Naive thymus-derived CD4-positive, alpha-beta T cell (primary cell): ENCODE measurements at regions of chr6 and their contacts with region 1.

Region 1: DNA sequence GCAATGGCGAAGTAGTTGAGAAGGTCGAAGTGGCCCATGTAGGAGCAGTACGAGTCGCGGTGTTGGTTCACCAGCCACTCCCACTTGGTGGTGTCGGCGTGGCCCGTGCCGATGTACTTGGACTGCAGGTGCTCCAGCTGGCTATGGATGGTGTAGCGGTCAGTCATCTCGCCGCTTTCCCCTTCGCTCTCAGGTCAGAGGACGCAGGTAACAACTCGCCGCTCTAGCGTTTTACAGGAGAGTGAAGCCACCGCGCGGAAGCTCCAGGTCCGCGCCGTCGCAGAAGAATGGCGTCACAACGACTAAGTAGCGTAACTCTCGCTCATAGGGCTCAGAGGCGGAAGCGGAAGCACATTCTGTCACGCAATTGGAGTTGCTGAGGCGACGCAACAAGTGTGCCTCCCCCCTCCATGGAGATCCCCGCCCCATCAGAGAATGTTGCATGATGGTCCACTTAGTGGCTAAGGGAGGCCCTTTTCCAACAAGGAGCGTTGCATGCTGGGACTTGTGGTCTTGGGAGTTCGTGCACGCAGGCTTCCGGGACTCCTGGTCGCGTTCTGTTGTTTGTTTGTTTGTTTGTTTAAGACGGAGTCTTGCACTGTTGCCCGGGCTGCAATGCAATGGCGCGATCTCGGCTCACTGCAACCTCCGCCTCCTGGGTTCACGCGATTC is at the start of gene SF3B5:
- DNase-seq: peak; percentile 86 to 99 (median 97)
- ATAC-seq: peak; percentile 98
- H3K4me3 ChIP-seq: peak within 1 kb of the TSS; percentile 98
- H3K4me3 Mint-ChIP-seq: peak within 1 kb of the TSS; percentile 93 to 100 (median 98)
- H3K27ac ChIP-seq: peak within 1 kb of the TSS; percentile 92
- H3K27ac Mint-ChIP-seq: peak within 1 kb of the TSS; percentile 96 to 100 (median 98)
- H3K4me1 ChIP-seq: peaks cover 13 to 14% of the 10 kb centered on the region in 2 donors
- H3K4me1 Mint-ChIP-seq: peaks cover 15 to 38% (median 32%) of the 10 kb centered on the region in 7 donors
- H3K27me3 ChIP-seq: no peaks in the 10 kb centered on the region
- H3K27me3 Mint-ChIP-seq: peaks cover 0 to 10% (median 0%) of the 10 kb centered on the region in 5 donors
- total RNA-seq, gene SF3B5: 89.2 to 155 (median 122) TPM

Region 2: GRCh38 chr6:143450453-143451371 is 644.8 kb before region 1 on chr6 and contains the starts of genes ADAT2 and PEX3:
- CTCF ChIA-PET with region 1: no interaction called
- POLR2A ChIA-PET with region 1: interaction called, 4 read pairs
- intact Hi-C with region 1: loop called (anchors 1 kb)
- DNase-seq: peak; percentile 87 to 95 (median 94)
- ATAC-seq: peak; percentile 98
- H3K4me3 ChIP-seq: peak within 1 kb of the TSS; percentile 89
- H3K4me3 Mint-ChIP-seq: peak within 1 kb of the TSS; percentile 84 to 100 (median 99)
- H3K27ac ChIP-seq: peak within 1 kb of the TSS; percentile 80
- H3K27ac Mint-ChIP-seq: peak within 1 kb of the TSS; percentile 93 to 99 (median 96)
- H3K4me1 ChIP-seq: peaks cover 14 to 18% of the 10 kb centered on the region in 2 donors
- H3K4me1 Mint-ChIP-seq: peaks cover 20 to 61% (median 49%) of the 10 kb centered on the region in 7 donors
- H3K27me3 ChIP-seq: no peaks in the 10 kb centered on the region
- H3K27me3 Mint-ChIP-seq: no peaks in the 10 kb centered on the region
- total RNA-seq, gene ADAT2: 18.4 to 25.8 (median 20.8) TPM
- total RNA-seq, gene PEX3: 10.9 to 28.8 (median 19.1) TPM

Region 3: GRCh38 chr6:143598466-143599080 is 496.9 kb before region 1 on chr6:
- CTCF ChIA-PET with region 1: no interaction called
- POLR2A ChIA-PET with region 1: no interaction called
- intact Hi-C with region 1: loop called in 1 of 2 experiments (anchors 1 kb)
- DNase-seq: peak in 1 of 9 donors; percentile 3
- ATAC-seq: peak; percentile 72
- H3K4me3 ChIP-seq: no peak overlapping the region
- H3K4me3 Mint-ChIP-seq: peak overlapping the region in 4 of 10 donors; percentile 16 to 36 (median 27)
- H3K27ac ChIP-seq: no peak overlapping the region
- H3K27ac Mint-ChIP-seq: peak overlapping the region in 1 of 9 donors; percentile 70
- H3K4me1 ChIP-seq: peaks cover 0 to 6% of the 10 kb centered on the region in 2 donors
- H3K4me1 Mint-ChIP-seq: peaks cover 13 to 24% (median 16%) of the 10 kb centered on the region in 7 donors
- H3K27me3 ChIP-seq: no peaks in the 10 kb centered on the region
- H3K27me3 Mint-ChIP-seq: no peaks in the 10 kb centered on the region

Region 4: DNA sequence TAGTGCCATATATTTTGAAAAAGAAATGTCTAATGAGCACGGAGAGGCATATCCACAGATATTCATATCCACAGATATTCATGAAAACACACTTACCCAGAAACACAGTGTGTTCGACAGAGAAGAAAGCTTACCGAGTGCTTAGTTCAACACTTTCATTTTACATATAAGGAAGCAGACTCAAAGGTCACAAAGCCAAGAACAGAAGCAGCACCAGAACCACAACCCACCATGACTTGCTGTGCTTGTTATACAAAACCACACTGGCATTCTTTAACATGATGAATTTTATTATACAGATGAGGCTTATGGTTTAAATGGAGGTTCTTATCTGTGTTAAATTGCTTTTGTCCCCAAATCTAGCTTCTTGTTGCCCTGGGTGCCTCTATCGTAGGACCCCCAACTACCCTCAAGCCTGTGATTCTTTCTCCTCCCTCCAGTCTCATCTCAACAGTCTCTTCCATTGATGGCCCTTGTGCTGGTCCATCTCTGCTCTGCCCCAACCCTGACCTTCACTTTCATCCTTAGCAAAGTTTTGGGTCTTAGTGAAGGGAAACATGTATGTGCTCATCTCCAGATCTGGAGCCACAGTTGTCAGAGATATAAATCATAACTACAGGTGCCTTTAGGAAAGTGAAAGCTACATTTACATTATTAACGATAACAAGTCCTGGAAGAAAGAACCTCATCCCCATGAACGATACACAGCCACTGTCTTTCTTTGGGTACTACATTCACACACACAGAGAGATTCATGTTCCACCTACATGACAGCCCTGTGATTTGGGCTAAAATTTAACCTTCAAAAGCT is 40.1 kb before region 1 on chr6:
- CTCF ChIA-PET with region 1: no interaction called
- POLR2A ChIA-PET with region 1: interaction called, 8 read pairs
- intact Hi-C with region 1: loop called (anchors 1 kb)
- DNase-seq: peak in 7 of 9 donors; percentile 49 to 76 (median 66)
- ATAC-seq: peak; percentile 96
- H3K4me3 ChIP-seq: peak overlapping the region; percentile 52
- H3K4me3 Mint-ChIP-seq: peak overlapping the region; percentile 74 to 93 (median 87)
- H3K27ac ChIP-seq: peak overlapping the region; percentile 66
- H3K27ac Mint-ChIP-seq: peak overlapping the region; percentile 78 to 99 (median 93)
- H3K4me1 ChIP-seq: peaks cover 12 to 23% of the 10 kb centered on the region in 2 donors
- H3K4me1 Mint-ChIP-seq: peaks cover 24 to 42% (median 31%) of the 10 kb centered on the region in 7 donors
- H3K27me3 ChIP-seq: no peaks in the 10 kb centered on the region
- H3K27me3 Mint-ChIP-seq: no peaks in the 10 kb centered on the region

Region 5: GRCh38 chr6:144215932-144216667 is 120.6 kb after region 1 on chr6:
- CTCF ChIA-PET with region 1: no interaction called
- POLR2A ChIA-PET with region 1: interaction called, 4 read pairs
- intact Hi-C with region 1: loop called (anchors 1 kb)
- DNase-seq: peak; percentile 84 to 96 (median 94)
- ATAC-seq: peak; percentile 91
- H3K4me3 ChIP-seq: peak overlapping the region; percentile 73
- H3K4me3 Mint-ChIP-seq: peak overlapping the region; percentile 84 to 99 (median 97)
- H3K27ac ChIP-seq: peak overlapping the region; percentile 86
- H3K27ac Mint-ChIP-seq: peak overlapping the region; percentile 91 to 100 (median 100)
- H3K4me1 ChIP-seq: peaks cover 15 to 18% of the 10 kb centered on the region in 2 donors
- H3K4me1 Mint-ChIP-seq: peaks cover 12 to 48% (median 40%) of the 10 kb centered on the region in 7 donors
- H3K27me3 ChIP-seq: no peaks in the 10 kb centered on the region
- H3K27me3 Mint-ChIP-seq: peaks cover 0 to 12% (median 0%) of the 10 kb centered on the region in 5 donors

Region 6: GRCh38 chr6:144232176-144232831 is 136.8 kb after region 1 on chr6:
- CTCF ChIA-PET with region 1: no interaction called
- POLR2A ChIA-PET with region 1: no interaction called
- intact Hi-C with region 1: no loop called
- DNase-seq: no peak
- ATAC-seq: no peak
- H3K4me3 ChIP-seq: no peak overlapping the region
- H3K4me3 Mint-ChIP-seq: no peak overlapping the region
- H3K27ac ChIP-seq: no peak overlapping the region
- H3K27ac Mint-ChIP-seq: peak overlapping the region in 1 of 9 donors; percentile 34
- H3K4me1 ChIP-seq: no peaks in the 10 kb centered on the region
- H3K4me1 Mint-ChIP-seq: no peaks in the 10 kb centered on the region
- H3K27me3 ChIP-seq: no peaks in the 10 kb centered on the region
- H3K27me3 Mint-ChIP-seq: peaks cover 0 to 6% (median 0%) of the 10 kb centered on the region in 5 donors

Region 7: GRCh38 chr6:144343701-144344428 is 248.4 kb after region 1 on chr6:
- CTCF ChIA-PET with region 1: no interaction called
- POLR2A ChIA-PET with region 1: no interaction called
- intact Hi-C with region 1: loop called (anchors 1 kb)
- DNase-seq: peak in 8 of 9 donors; percentile 37 to 85 (median 76)
- ATAC-seq: peak; percentile 88
- H3K4me3 ChIP-seq: peak overlapping the region; percentile 67
- H3K4me3 Mint-ChIP-seq: peak overlapping the region; percentile 80 to 99 (median 94)
- H3K27ac ChIP-seq: peak overlapping the region; percentile 75
- H3K27ac Mint-ChIP-seq: peak overlapping the region; percentile 87 to 99 (median 96)
- H3K4me1 ChIP-seq: peaks cover 58 to 62% of the 10 kb centered on the region in 2 donors
- H3K4me1 Mint-ChIP-seq: peaks cover 68 to 93% (median 84%) of the 10 kb centered on the region in 7 donors
- H3K27me3 ChIP-seq: no peaks in the 10 kb centered on the region
- H3K27me3 Mint-ChIP-seq: no peaks in the 10 kb centered on the region

Region 8: GRCh38 chr6:144718431-144718830 is 623.0 kb after region 1 on chr6:
- CTCF ChIA-PET with region 1: no interaction called
- POLR2A ChIA-PET with region 1: no interaction called
- intact Hi-C with region 1: no loop called
- DNase-seq: no peak
- ATAC-seq: no peak
- H3K4me3 ChIP-seq: no peak overlapping the region
- H3K4me3 Mint-ChIP-seq: no peak overlapping the region
- H3K27ac ChIP-seq: no peak overlapping the region
- H3K27ac Mint-ChIP-seq: peak overlapping the region in 1 of 9 donors; percentile 11
- H3K4me1 ChIP-seq: no peaks in the 10 kb centered on the region
- H3K4me1 Mint-ChIP-seq: peaks cover 12 to 44% (median 19%) of the 10 kb centered on the region in 7 donors
- H3K27me3 ChIP-seq: no peaks in the 10 kb centered on the region
- H3K27me3 Mint-ChIP-seq: no peaks in the 10 kb centered on the region

Region 9: DNA sequence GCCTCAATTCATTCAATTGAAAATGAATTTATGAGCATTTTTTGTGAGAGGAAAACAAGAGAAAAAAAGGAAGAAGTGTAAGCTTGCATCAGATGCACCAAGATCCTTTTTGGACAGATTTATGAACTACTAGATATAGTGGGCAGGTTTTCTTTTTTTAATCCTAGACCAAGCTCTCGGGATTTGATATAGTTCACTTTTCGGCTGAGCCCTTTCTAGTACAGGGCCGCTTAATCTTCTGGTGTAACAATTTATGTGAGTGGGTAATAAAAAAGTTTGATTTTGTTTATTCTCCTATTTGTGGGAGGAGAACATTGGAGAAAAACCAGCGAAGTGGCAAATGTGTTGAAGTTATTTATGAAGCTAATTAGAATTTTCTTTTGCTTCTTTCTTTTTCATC is 727.7 kb after region 1 on chr6:
- CTCF ChIA-PET with region 1: no interaction called
- POLR2A ChIA-PET with region 1: no interaction called
- intact Hi-C with region 1: no loop called
- DNase-seq: no peak
- ATAC-seq: no peak
- H3K4me3 ChIP-seq: no peak overlapping the region
- H3K4me3 Mint-ChIP-seq: no peak overlapping the region
- H3K27ac ChIP-seq: no peak overlapping the region
- H3K27ac Mint-ChIP-seq: peak overlapping the region in 2 of 9 donors; percentile 13 to 26
- H3K4me1 ChIP-seq: no peaks in the 10 kb centered on the region
- H3K4me1 Mint-ChIP-seq: peaks cover 0 to 1% (median 0%) of the 10 kb centered on the region in 7 donors
- H3K27me3 ChIP-seq: no peaks in the 10 kb centered on the region
- H3K27me3 Mint-ChIP-seq: no peaks in the 10 kb centered on the region